Breast epithelium (tissue), 4 donors: ENCODE measurements at regions of chr16 and their contacts with region 1.

Region 1: GRCh38 chr16:70750893-70751475 is 50.0 kb downstream of the VAC14 start:
- DNase-seq: peak in 1 of 2 donors; percentile 45
- H3K4me3 ChIP-seq: no peak overlapping the region
- H3K27ac ChIP-seq: peak overlapping the region; percentile 52 to 85
- H3K4me1 ChIP-seq: peaks cover 23 to 34% of the 10 kb centered on the region in 2 donors
- H3K27me3 ChIP-seq: no peaks in the 10 kb centered on the region
- CTCF ChIP-seq: no peak
- POLR2A ChIP-seq: no peak

Region 2: GRCh38 chr16:70348991-70349390 is 402.0 kb before region 1 on chr16:
- intact Hi-C with region 1: loop called (anchors 5 kb)
- DNase-seq: no peak
- H3K4me3 ChIP-seq: no peak overlapping the region
- H3K27ac ChIP-seq: no peak overlapping the region
- H3K4me1 ChIP-seq: peaks cover 0 to 9% of the 10 kb centered on the region in 2 donors
- H3K27me3 ChIP-seq: no peaks in the 10 kb centered on the region
- CTCF ChIP-seq: no peak
- POLR2A ChIP-seq: no peak

Region 3: DNA sequence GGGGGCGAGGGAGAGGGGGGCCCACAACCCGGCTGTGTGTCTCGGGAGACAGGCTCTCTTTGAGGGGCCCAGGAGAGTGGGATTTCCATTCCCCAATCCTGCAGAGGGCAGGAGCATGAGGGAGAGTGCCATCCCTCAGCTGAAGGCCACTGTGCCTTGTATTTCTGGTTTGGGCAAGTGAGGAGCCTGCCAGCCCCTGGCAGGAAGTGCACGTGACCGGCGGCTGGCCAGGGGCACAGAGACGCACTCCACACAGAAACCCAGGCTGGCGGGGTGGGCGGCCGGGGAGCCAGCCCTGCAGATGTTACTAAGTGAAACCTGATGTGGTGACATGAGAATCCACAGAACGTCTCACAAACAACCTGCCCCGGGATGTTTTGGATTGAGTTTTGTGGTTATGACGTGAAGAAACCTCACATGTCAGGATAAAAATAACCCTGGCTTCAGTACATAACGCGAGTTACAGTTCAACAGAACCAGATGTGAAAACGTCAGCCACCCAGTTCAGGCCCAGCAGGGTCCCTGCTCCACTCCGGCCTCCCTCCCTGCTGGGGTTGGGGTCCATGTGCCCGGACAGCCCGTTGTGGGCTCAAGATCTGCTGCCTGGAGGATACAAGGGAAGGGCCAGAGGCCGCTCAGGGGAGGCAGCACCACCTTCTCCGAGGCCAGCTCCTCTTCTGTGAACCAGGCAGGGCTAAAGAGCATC is 13.5 kb before region 1 on chr16:
- intact Hi-C with region 1: no loop called
- DNase-seq: peak; percentile 78 to 91
- H3K4me3 ChIP-seq: peak overlapping the region in 1 of 3 donors; percentile 51
- H3K27ac ChIP-seq: peak overlapping the region; percentile 93 to 97
- H3K4me1 ChIP-seq: peaks cover 19 to 24% of the 10 kb centered on the region in 2 donors
- H3K27me3 ChIP-seq: no peaks in the 10 kb centered on the region
- CTCF ChIP-seq: no peak
- POLR2A ChIP-seq: no peak

Region 4: DNA sequence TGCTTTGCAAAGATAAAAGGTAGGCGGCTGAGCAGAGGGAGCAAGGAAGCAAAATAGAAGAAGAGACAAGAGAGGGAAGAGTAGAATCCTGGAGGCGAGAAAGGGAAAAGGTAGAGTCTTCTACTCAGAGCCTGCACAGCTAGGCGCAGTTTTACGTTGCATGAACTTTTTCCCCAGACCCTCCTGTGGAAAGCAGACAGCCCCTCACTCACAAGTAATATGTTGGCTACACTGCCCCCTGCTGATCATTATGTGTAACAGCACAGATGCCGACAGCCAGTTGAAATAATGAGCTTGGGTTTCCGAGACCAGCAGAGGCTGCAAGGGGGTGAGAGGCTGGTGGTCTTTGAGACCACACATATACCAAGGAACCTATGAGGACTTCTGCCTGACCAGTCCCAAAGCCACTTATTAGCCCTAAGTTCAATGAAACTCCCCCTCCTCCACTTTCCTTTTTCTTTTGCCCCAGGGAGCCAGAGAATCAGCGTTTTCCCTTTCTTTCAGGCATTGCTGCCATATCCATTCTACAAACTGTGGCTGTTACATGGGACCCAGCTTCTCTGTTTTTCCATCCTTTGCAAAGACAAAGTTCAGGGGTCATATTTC is 560.7 kb after region 1 on chr16:
- intact Hi-C with region 1: no loop called
- DNase-seq: no peak
- H3K4me3 ChIP-seq: no peak overlapping the region
- H3K27ac ChIP-seq: no peak overlapping the region
- H3K4me1 ChIP-seq: no peaks in the 10 kb centered on the region
- H3K27me3 ChIP-seq: no peaks in the 10 kb centered on the region
- CTCF ChIP-seq: peak; percentile 53 to 76 (median 73)
- POLR2A ChIP-seq: no peak